Activated B cell treated with CpG ODN at 0.5 μM for 24 hours (primary cell): ENCODE measurements at regions of chr6 and their contacts with region 1.

Region 1: GRCh38 chr6:27893059-27893835 is 18.9 kb downstream of the OR2B2 start:
- DNase-seq: peak; percentile 67
- ATAC-seq: peak; percentile 71
- H3K4me3 Mint-ChIP-seq: no peak overlapping the region
- H3K27ac Mint-ChIP-seq: no peak overlapping the region
- H3K4me1 Mint-ChIP-seq: peaks cover 32% of the 10 kb centered on the region
- H3K27me3 Mint-ChIP-seq: no peaks in the 10 kb centered on the region
- CTCF ChIP-seq: no peak

Region 2: GRCh38 chr6:26196846-26197648 is 1696.2 kb before region 1 on chr6:
- CTCF ChIA-PET with region 1: no interaction called
- POLR2A ChIA-PET with region 1: interaction called, 57 read pairs
- intact Hi-C with region 1: no loop called
- DNase-seq: peak; percentile 63
- ATAC-seq: peak; percentile 53
- H3K4me3 Mint-ChIP-seq: peak overlapping the region; percentile 93
- H3K27ac Mint-ChIP-seq: peak overlapping the region; percentile 96
- H3K4me1 Mint-ChIP-seq: peaks cover 52% of the 10 kb centered on the region
- H3K27me3 Mint-ChIP-seq: no peaks in the 10 kb centered on the region
- CTCF ChIP-seq: no peak

Region 3: GRCh38 chr6:27126815-27127537 is 766.3 kb before region 1 on chr6:
- CTCF ChIA-PET with region 1: interaction called, 13 read pairs
- POLR2A ChIA-PET with region 1: interaction called, 85 read pairs
- intact Hi-C with region 1: loop called (anchors 1 kb)
- DNase-seq: peak; percentile 55
- ATAC-seq: peak; percentile 79
- H3K4me3 Mint-ChIP-seq: peak overlapping the region; percentile 81
- H3K27ac Mint-ChIP-seq: peak overlapping the region; percentile 82
- H3K4me1 Mint-ChIP-seq: peaks cover 14% of the 10 kb centered on the region
- H3K27me3 Mint-ChIP-seq: no peaks in the 10 kb centered on the region
- CTCF ChIP-seq: peak; percentile 54

Region 4: GRCh38 chr6:27312146-27312949 is 580.9 kb before region 1 on chr6 and contains the start of gene POM121L2:
- CTCF ChIA-PET with region 1: interaction called, 7 read pairs
- POLR2A ChIA-PET with region 1: no interaction called
- intact Hi-C with region 1: loop called (anchors 1 kb)
- DNase-seq: peak; percentile 53
- ATAC-seq: peak; percentile 71
- H3K4me3 Mint-ChIP-seq: peak within 1 kb of the TSS; percentile 82
- H3K27ac Mint-ChIP-seq: no peak within 1 kb of the TSS
- H3K4me1 Mint-ChIP-seq: peaks cover 12% of the 10 kb centered on the region
- H3K27me3 Mint-ChIP-seq: peaks cover 66% of the 10 kb centered on the region
- CTCF ChIP-seq: no peak
- total RNA-seq, gene POM121L2: not detected in 2 replicates

Region 5: DNA sequence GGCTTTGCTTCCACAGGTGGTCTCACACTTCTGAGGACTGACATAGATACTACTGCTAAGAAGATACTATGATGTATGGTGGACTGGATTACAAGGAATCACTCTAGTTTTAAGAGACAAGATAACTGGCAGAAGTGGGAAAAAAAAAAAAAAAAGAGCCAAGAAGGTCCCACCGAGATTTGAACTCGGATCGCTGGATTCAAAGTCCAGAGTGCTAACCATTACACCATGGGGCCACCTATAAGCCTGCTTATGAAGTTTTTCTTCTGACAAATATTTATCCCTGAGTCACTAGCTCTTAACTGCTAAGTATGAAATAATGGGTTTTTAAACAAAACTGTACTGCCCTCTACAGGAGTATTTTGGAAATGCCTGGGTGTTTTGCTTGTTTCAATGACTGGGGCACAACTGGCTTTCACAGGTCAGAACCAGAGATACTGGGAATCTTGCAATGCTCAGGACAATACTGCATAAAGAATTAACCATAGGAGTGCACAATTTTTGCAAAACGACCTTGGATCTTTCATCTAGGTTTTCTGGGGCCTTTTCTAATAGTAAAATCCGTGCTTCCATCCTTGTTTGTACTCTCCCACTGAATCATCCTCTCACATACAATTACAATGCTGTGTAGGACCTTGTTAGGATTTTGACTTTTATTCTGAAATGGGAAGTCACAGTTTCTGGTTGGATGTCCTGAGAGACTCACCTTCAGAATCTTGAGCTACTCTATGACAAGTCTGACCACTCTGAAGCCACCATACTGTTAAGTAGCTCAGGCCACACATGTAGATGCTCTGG is 97.4 kb before region 1 on chr6:
- CTCF ChIA-PET with region 1: interaction called, 41 read pairs
- POLR2A ChIA-PET with region 1: interaction called, 9 read pairs
- intact Hi-C with region 1: loop called (anchors 1 kb)
- DNase-seq: no peak
- ATAC-seq: peak; percentile 60
- H3K4me3 Mint-ChIP-seq: no peak overlapping the region
- H3K27ac Mint-ChIP-seq: peak overlapping the region; percentile 50
- H3K4me1 Mint-ChIP-seq: peaks cover 21% of the 10 kb centered on the region
- H3K27me3 Mint-ChIP-seq: peaks cover 6% of the 10 kb centered on the region
- CTCF ChIP-seq: no peak

Region 6: GRCh38 chr6:27922949-27923348 is 29.7 kb after region 1 on chr6:
- CTCF ChIA-PET with region 1: no interaction called
- POLR2A ChIA-PET with region 1: no interaction called
- intact Hi-C with region 1: no loop called
- DNase-seq: no peak
- ATAC-seq: no peak
- H3K4me3 Mint-ChIP-seq: no peak overlapping the region
- H3K27ac Mint-ChIP-seq: no peak overlapping the region
- H3K4me1 Mint-ChIP-seq: no peaks in the 10 kb centered on the region
- H3K27me3 Mint-ChIP-seq: peaks cover 2% of the 10 kb centered on the region
- CTCF ChIP-seq: no peak

Region 7: GRCh38 chr6:28080631-28081485 is 187.6 kb after region 1 on chr6:
- CTCF ChIA-PET with region 1: no interaction called
- POLR2A ChIA-PET with region 1: no interaction called
- intact Hi-C with region 1: no loop called
- DNase-seq: peak; percentile 89
- ATAC-seq: peak; percentile 68
- H3K4me3 Mint-ChIP-seq: peak overlapping the region; percentile 98
- H3K27ac Mint-ChIP-seq: peak overlapping the region; percentile 97
- H3K4me1 Mint-ChIP-seq: peaks cover 52% of the 10 kb centered on the region
- H3K27me3 Mint-ChIP-seq: no peaks in the 10 kb centered on the region
- CTCF ChIP-seq: no peak

Region 8: GRCh38 chr6:28136585-28137504 is 243.6 kb after region 1 on chr6:
- CTCF ChIA-PET with region 1: no interaction called
- POLR2A ChIA-PET with region 1: interaction called, 10 read pairs
- intact Hi-C with region 1: no loop called
- DNase-seq: peak; percentile 69
- ATAC-seq: peak; percentile 42
- H3K4me3 Mint-ChIP-seq: peak overlapping the region; percentile 98
- H3K27ac Mint-ChIP-seq: peak overlapping the region; percentile 100
- H3K4me1 Mint-ChIP-seq: peaks cover 76% of the 10 kb centered on the region
- H3K27me3 Mint-ChIP-seq: no peaks in the 10 kb centered on the region
- CTCF ChIP-seq: no peak